GM12878 (cell line): ENCODE measurements at regions of chr7 and their contacts with region 1.

Region 1: GRCh38 chr7:136114966-136115762 is 138.0 kb upstream of the MTPN start:
- DNase-seq: no peak
- ATAC-seq: peak; percentile 99
- H3K4me3 ChIP-seq: no peak overlapping the region
- H3K27ac ChIP-seq: no peak overlapping the region
- H3K4me1 ChIP-seq: no peaks in the 10 kb centered on the region
- H3K27me3 ChIP-seq: no peaks in the 10 kb centered on the region
- CTCF ChIP-seq: peak; percentile 77 to 79 (median 79)
- EP300 ChIP-seq: no peak
- POLR2A ChIP-seq: no peak
- RAD21 ChIP-seq: peak; percentile 61

Region 2: GRCh38 chr7:135801045-135801693 is 314.0 kb before region 1 on chr7:
- CTCF ChIA-PET with region 1: no interaction called
- POLR2A ChIA-PET with region 1: no interaction called
- RAD21 ChIA-PET with region 1: no interaction called
- SMC1A ChIA-PET with region 1: no interaction called
- in situ Hi-C with region 1: no loop called
- intact Hi-C with region 1: loop called (anchors 10 kb)
- DNase-seq: peak; percentile 35
- ATAC-seq: peak; percentile 91
- H3K4me3 ChIP-seq: no peak overlapping the region
- H3K27ac ChIP-seq: no peak overlapping the region
- H3K4me1 ChIP-seq: no peaks in the 10 kb centered on the region
- H3K27me3 ChIP-seq: 0 out of 4 replicates have a peak, but pooled peaks cover 0 to 2% of the 10 kb centered on the region in 2 experiments
- CTCF ChIP-seq: peak; percentile 71 to 87 (median 86)
- EP300 ChIP-seq: no peak
- POLR2A ChIP-seq: no peak
- RAD21 ChIP-seq: peak; percentile 99

Region 3: GRCh38 chr7:136104269-136104603 is 10.9 kb before region 1 on chr7:
- CTCF ChIA-PET with region 1: interaction called, 16 read pairs
- POLR2A ChIA-PET with region 1: no interaction called
- RAD21 ChIA-PET with region 1: no interaction called
- SMC1A ChIA-PET with region 1: no interaction called
- in situ Hi-C with region 1: no loop called
- intact Hi-C with region 1: no loop called
- DNase-seq: no peak
- ATAC-seq: no peak
- H3K4me3 ChIP-seq: no peak overlapping the region
- H3K27ac ChIP-seq: no peak overlapping the region
- H3K4me1 ChIP-seq: no peaks in the 10 kb centered on the region
- H3K27me3 ChIP-seq: no peaks in the 10 kb centered on the region
- CTCF ChIP-seq: no peak
- EP300 ChIP-seq: no peak
- POLR2A ChIP-seq: no peak
- RAD21 ChIP-seq: no peak

Region 4: GRCh38 chr7:136130819-136131643 is 15.9 kb after region 1 on chr7:
- CTCF ChIA-PET with region 1: interaction called, 12 read pairs
- POLR2A ChIA-PET with region 1: no interaction called
- RAD21 ChIA-PET with region 1: no interaction called
- SMC1A ChIA-PET with region 1: no interaction called
- in situ Hi-C with region 1: no loop called
- intact Hi-C with region 1: no loop called
- DNase-seq: no peak
- ATAC-seq: peak; percentile 71
- H3K4me3 ChIP-seq: no peak overlapping the region
- H3K27ac ChIP-seq: no peak overlapping the region
- H3K4me1 ChIP-seq: no peaks in the 10 kb centered on the region
- H3K27me3 ChIP-seq: no peaks in the 10 kb centered on the region
- CTCF ChIP-seq: no peak
- EP300 ChIP-seq: no peak; a peak in 1 of 4 replicates
- POLR2A ChIP-seq: no peak
- RAD21 ChIP-seq: no peak

Region 5: GRCh38 chr7:136210079-136210478 is 94.9 kb after region 1 on chr7:
- CTCF ChIA-PET with region 1: no interaction called
- POLR2A ChIA-PET with region 1: no interaction called
- RAD21 ChIA-PET with region 1: no interaction called
- SMC1A ChIA-PET with region 1: no interaction called
- in situ Hi-C with region 1: no loop called
- intact Hi-C with region 1: no loop called
- DNase-seq: no peak
- ATAC-seq: no peak
- H3K4me3 ChIP-seq: no peak overlapping the region
- H3K27ac ChIP-seq: no peak overlapping the region
- H3K4me1 ChIP-seq: no peaks in the 10 kb centered on the region
- H3K27me3 ChIP-seq: no peaks in the 10 kb centered on the region
- CTCF ChIP-seq: no peak
- EP300 ChIP-seq: no peak
- POLR2A ChIP-seq: no peak
- RAD21 ChIP-seq: no peak

Region 6: GRCh38 chr7:136405931-136406777 is 291.0 kb after region 1 on chr7:
- CTCF ChIA-PET with region 1: interaction called, 6 read pairs
- POLR2A ChIA-PET with region 1: no interaction called
- RAD21 ChIA-PET with region 1: no interaction called
- SMC1A ChIA-PET with region 1: no interaction called
- in situ Hi-C with region 1: no loop called
- intact Hi-C with region 1: loop called (anchors 2 kb)
- DNase-seq: no peak
- ATAC-seq: peak; percentile 98
- H3K4me3 ChIP-seq: no peak overlapping the region
- H3K27ac ChIP-seq: no peak overlapping the region
- H3K4me1 ChIP-seq: no peaks in the 10 kb centered on the region
- H3K27me3 ChIP-seq: no peaks in the 10 kb centered on the region
- CTCF ChIP-seq: peak; percentile 56 to 84 (median 81)
- EP300 ChIP-seq: no peak
- POLR2A ChIP-seq: no peak
- RAD21 ChIP-seq: peak; percentile 56

Region 7: GRCh38 chr7:136687693-136688322 is 572.6 kb after region 1 on chr7:
- CTCF ChIA-PET with region 1: interaction called, 7 read pairs
- POLR2A ChIA-PET with region 1: no interaction called
- RAD21 ChIA-PET with region 1: no interaction called
- SMC1A ChIA-PET with region 1: no interaction called
- in situ Hi-C with region 1: no loop called
- intact Hi-C with region 1: loop called (anchors 1 kb)
- DNase-seq: no peak
- ATAC-seq: peak; percentile 40; the same call in 2 of the 3 replicates
- H3K4me3 ChIP-seq: no peak overlapping the region
- H3K27ac ChIP-seq: no peak overlapping the region
- H3K4me1 ChIP-seq: no peaks in the 10 kb centered on the region
- H3K27me3 ChIP-seq: no peaks in the 10 kb centered on the region
- CTCF ChIP-seq: peak; percentile 49 to 61 (median 56)
- EP300 ChIP-seq: no peak
- POLR2A ChIP-seq: no peak
- RAD21 ChIP-seq: peak; percentile 50